OCI-LY7 (cell line): ENCODE measurements at regions of chr11 and their contacts with region 1.

Region 1: GRCh38 chr11:14148653-14149273 is 186.2 kb downstream of the SPON1 start:
- DNase-seq: peak; percentile 76
- H3K4me3 ChIP-seq: no peak overlapping the region
- H3K27ac ChIP-seq: no peak overlapping the region
- H3K4me1 ChIP-seq: peaks cover 3% of the 10 kb centered on the region
- CTCF ChIP-seq: peak; percentile 87

Region 2: DNA sequence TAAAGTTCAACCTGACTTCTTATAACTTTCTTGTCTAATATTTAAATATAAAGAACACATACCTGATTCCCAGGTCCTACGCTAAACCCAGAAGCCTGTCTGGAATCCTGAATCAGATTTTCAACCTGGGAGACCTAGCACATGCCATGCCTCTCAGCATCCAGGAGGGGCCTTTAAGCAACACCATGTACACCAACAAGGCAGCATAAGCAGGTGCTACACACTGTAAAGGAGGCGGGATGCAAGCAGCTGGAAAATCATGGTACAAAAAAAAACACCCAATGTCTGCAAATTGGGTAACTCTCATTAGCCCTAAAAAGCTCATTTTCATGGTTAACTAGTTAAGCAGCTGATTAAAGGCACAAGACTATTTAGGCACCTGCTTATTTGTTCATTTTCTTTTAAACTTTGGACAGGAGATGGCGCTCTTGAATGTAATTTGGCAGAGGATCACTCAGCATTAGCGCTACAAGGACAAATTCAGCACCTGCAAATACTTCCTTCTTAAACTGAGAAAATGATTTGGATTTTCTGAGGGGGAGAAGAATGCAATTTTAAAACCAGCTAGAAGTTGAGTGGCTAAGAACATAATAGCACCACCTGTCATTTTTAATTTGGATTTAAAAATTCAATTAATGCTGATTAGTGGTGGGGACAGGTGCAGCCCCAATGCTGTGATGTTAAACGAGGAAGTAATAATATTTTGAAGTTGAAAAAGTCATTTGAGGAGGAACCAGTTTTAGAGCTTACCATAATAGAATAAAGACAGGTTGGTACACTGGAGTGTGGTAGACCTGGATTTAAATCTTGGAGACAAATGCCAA is 376.3 kb before region 1 on chr11:
- CTCF ChIA-PET with region 1: interaction called, 8 read pairs
- POLR2A ChIA-PET with region 1: interaction called, 4 read pairs
- intact Hi-C with region 1: loop called (anchors 1 kb)
- DNase-seq: peak; percentile 90
- H3K4me3 ChIP-seq: no peak overlapping the region
- H3K27ac ChIP-seq: peak overlapping the region; percentile 21
- H3K4me1 ChIP-seq: peaks cover 25% of the 10 kb centered on the region
- CTCF ChIP-seq: peak; percentile 98

Region 3: DNA sequence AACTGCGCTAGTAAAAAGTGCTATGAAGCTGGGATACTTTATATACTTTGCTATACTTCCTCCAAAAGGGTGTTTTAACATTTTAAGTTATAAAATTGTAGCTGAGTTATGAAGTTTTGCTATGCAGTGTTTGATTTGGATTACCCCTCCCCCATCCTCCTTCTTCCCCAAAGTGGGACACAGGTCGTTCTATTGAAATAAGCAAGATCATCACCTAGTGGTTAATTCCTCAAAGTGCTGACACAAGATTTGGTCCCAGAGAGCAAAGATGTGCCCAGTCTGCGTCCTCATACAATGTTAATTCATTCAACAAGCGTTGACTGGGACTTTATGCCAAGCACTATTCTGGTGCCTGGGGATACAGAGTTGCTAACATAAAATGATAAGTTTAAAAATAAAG is 107.7 kb before region 1 on chr11:
- CTCF ChIA-PET with region 1: no interaction called
- POLR2A ChIA-PET with region 1: interaction called, 5 read pairs
- intact Hi-C with region 1: loop called (anchors 5 kb)
- DNase-seq: peak; percentile 41
- H3K4me3 ChIP-seq: no peak overlapping the region
- H3K27ac ChIP-seq: no peak overlapping the region
- H3K4me1 ChIP-seq: no peaks in the 10 kb centered on the region
- CTCF ChIP-seq: peak; percentile 77

Region 4: DNA sequence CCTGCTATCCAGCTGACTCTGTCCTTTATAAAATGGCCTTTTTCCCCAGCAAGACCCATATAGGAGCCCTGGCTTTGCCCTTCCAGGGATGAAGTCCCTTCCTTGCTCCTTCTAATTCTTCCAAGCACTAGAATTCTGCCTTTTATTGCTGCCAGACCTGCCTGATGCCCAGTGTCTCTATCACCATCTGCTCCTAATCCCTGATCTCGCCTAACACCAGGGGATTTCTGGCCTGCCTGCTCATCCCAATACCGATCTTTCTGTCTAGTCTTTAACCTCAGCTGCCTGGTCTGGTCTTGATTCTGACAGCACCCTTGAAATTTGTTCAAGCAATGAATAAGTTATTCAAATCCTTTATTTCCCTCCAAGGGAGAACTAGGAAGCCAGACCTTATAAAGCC is 36.0 kb before region 1 on chr11:
- CTCF ChIA-PET with region 1: no interaction called
- POLR2A ChIA-PET with region 1: no interaction called
- intact Hi-C with region 1: no loop called
- DNase-seq: no peak
- H3K4me3 ChIP-seq: no peak overlapping the region
- H3K27ac ChIP-seq: no peak overlapping the region
- H3K4me1 ChIP-seq: no peaks in the 10 kb centered on the region
- CTCF ChIP-seq: no peak